PC-9 (cell line): ENCODE measurements at regions of chr17 and their contacts with region 1.

Region 1: DNA sequence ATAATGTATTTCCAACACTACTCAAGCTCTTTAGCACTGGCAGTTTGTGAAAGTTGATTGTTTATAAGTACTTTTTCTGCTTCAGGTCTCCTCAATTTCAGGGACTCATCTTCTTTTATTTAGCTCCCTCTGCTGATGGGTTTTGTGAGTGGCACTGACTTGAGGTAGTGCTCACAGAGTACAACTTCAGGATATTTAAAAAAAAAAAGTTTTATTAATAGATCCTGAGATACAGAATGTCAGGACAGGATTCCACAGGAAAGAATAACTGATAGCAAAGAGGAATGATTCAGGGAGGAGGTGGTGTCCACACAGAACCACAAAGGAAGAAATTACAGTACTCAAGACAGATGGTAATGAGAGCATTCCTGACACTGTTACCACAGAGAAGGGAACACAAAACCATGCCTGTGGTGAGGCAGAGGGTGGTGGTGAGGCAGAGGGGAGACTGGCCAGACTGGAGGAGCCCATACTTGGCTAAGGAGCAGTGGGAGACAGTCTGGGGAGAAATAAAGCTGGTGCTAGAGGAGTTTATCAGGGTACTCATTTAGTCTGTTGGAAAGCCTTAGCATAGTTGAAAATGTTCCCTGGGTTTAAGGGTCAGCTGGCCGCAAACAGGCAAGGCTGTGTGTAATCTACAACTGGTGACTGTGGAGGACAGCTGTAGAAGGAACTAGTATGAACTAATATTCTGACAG is 63.7 kb downstream of the SPAG9 start:
- DNase-seq: peak; percentile 23 to 58
- H3K4me3 ChIP-seq: no peak overlapping the region
- H3K27ac ChIP-seq: peak overlapping the region; percentile 29; the same call in 1 of the 2 replicates
- H3K4me1 ChIP-seq: peaks cover 18% of the 10 kb centered on the region
- H3K27me3 ChIP-seq: no peaks in the 10 kb centered on the region
- CTCF ChIP-seq: peak; percentile 82

Region 2: DNA sequence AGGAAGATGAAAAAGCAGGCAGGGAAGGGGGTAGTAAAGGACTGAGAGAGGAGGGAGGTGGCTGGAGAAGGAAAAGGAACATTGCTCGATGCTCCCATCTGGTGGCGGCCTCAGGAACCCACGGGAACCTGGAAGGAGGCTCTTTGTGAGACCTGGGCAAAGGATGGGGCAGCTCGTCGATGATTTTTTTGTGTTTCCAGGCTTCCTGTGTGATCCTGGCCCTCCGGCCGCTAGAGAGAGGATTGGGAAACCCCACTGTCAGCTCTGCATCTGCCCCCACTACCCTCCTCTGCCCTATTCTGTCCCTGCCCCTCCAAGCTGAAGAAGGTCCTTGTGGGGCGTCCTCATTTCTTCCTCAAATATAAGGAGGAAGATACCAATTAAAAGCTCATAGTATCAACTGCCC is 215.0 kb before region 1 on chr17:
- CTCF ChIA-PET with region 1: interaction called, 12 read pairs
- POLR2A ChIA-PET with region 1: no interaction called
- intact Hi-C with region 1: no loop called
- DNase-seq: peak; percentile 43 to 76
- H3K4me3 ChIP-seq: no peak overlapping the region
- H3K27ac ChIP-seq: no peak overlapping the region
- H3K4me1 ChIP-seq: peaks cover 18% of the 10 kb centered on the region
- H3K27me3 ChIP-seq: no peaks in the 10 kb centered on the region
- CTCF ChIP-seq: peak; percentile 83

Region 3: DNA sequence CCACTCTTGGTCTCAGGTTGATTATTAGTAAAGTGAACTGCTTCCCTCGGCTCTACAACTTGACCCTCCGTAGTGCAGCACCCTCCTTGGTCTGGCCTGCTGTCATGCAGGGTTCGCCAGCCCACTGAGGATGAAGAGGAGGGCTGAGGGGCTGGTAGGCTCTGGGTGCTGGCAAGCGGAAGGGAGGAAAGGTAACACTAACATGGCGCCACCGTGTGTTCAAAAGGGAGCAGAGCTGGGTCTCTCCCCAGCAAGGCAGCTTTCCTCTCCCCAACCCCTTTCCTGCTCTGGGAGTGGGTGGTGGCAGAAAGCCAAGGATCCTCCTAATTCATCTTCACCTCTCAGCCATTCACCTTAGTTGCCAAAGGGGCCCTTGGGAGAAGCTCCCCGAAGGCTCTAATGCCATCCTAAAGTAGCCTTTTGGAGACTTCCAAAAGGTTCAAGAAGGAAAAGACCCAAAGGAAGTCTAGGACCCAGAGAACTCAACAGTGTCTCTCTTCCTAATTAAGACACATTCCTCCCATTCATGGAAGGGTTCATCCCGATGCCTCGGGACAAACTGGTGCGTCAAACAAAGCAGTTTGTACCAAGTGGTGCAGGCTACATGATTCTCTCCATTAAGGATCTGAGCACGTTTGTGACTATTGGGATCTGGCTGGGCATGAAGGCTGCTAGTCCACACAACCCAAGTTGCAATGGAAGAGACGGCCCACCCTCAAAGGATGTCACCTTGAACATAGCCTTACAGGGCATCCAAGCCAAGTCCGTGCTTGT is 100.0 kb before region 1 on chr17:
- CTCF ChIA-PET with region 1: interaction called, 15 read pairs
- POLR2A ChIA-PET with region 1: no interaction called
- intact Hi-C with region 1: no loop called
- DNase-seq: peak; percentile 39 to 58
- H3K4me3 ChIP-seq: no peak overlapping the region
- H3K27ac ChIP-seq: no peak overlapping the region
- H3K4me1 ChIP-seq: peaks cover 13% of the 10 kb centered on the region
- H3K27me3 ChIP-seq: no peaks in the 10 kb centered on the region
- CTCF ChIP-seq: peak; percentile 84

Region 4: DNA sequence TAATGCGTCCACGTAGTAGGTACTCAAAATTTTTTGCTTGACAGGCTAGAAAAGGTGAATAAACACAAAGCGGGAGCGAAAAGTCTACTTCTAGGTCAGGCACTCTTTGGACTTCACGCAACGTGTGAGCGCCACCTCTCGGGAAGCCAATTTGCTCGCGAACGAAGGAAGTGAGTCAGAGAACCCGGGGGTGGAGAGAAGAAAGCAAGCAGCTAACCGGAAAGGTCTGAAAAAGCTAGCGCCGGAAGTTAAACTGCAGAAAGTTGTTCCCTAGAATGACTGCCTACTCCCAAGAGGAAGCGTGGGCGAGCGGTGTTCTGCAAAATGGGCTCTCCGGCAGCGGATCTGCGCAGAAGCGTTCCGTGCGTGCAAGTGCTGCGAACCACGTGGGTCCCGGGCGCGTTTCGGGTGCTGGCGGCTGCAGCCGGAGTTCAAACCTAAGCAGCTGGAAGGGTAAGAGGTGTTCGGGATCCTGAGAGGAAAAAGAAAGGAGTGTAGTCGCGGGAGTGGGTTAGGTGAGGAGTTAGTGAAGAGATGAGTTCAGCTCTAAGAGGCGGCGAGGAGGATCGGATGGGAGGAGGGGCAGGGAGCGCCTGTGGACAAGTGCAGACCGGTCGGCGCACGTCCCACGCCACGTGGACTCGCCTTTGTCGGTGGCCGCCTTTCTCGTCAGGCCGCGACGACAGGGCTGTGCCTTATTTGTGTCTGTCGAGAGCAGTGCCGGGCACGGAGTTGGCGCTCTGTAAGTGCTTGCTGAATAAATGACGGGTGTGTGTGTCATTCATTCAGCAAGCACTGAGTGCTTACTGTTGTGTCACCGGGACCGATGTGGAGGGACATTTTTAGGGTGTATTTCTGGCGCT is 96.5 kb after region 1 on chr17 and contains the start of gene NME1:
- CTCF ChIA-PET with region 1: interaction called, 5 read pairs
- POLR2A ChIA-PET with region 1: no interaction called
- intact Hi-C with region 1: loop called (anchors 2 kb)
- DNase-seq: peak; percentile 96 to 99
- H3K4me3 ChIP-seq: peak within 1 kb of the TSS; percentile 72
- H3K27ac ChIP-seq: peak within 1 kb of the TSS; percentile 78
- H3K4me1 ChIP-seq: peaks cover 22% of the 10 kb centered on the region
- H3K27me3 ChIP-seq: no peaks in the 10 kb centered on the region
- CTCF ChIP-seq: peak; percentile 86
- total RNA-seq, gene NME1: 115 and 172 TPM in 2 replicates